Naive thymus-derived CD8-positive, alpha-beta T cell (primary cell): ENCODE measurements at regions of chr5 and their contacts with region 1.

Region 1: GRCh38 chr5:151080623-151081430 is at the start of gene TNIP1:
- DNase-seq: peak; percentile 85 to 95 (median 92)
- ATAC-seq: peak; percentile 91 to 92
- H3K4me3 Mint-ChIP-seq: peak within 1 kb of the TSS; percentile 83 to 96 (median 92)
- H3K27ac Mint-ChIP-seq: peak within 1 kb of the TSS; percentile 75 to 97 (median 94)
- H3K4me1 Mint-ChIP-seq: peaks cover 37 to 90% (median 62%) of the 10 kb centered on the region in 4 donors
- H3K27me3 Mint-ChIP-seq: no peaks in the 10 kb centered on the region
- polyA plus RNA-seq, gene TNIP1: 25.6 to 37.5 (median 29.8) TPM

Region 2: GRCh38 chr5:151097786-151098498 is 17.1 kb after region 1 on chr5:
- POLR2A ChIA-PET with region 1: interaction called, 16 read pairs
- DNase-seq: peak in 1 of 10 donors; percentile 43
- ATAC-seq: peak; percentile 32 to 62
- H3K4me3 Mint-ChIP-seq: peak overlapping the region in 9 of 10 donors; percentile 20 to 71 (median 40)
- H3K27ac Mint-ChIP-seq: peak overlapping the region; percentile 64 to 93 (median 90)
- H3K4me1 Mint-ChIP-seq: peaks cover 33 to 76% (median 75%) of the 10 kb centered on the region in 4 donors
- H3K27me3 Mint-ChIP-seq: no peaks in the 10 kb centered on the region

Region 3: GRCh38 chr5:151107738-151108508 is 27.1 kb after region 1 on chr5:
- POLR2A ChIA-PET with region 1: interaction called, 12 read pairs
- DNase-seq: no peak
- ATAC-seq: no peak
- H3K4me3 Mint-ChIP-seq: no peak overlapping the region
- H3K27ac Mint-ChIP-seq: peak overlapping the region in 6 of 10 donors; percentile 1 to 78 (median 51)
- H3K4me1 Mint-ChIP-seq: peaks cover 0 to 6% (median 3%) of the 10 kb centered on the region in 4 donors
- H3K27me3 Mint-ChIP-seq: no peaks in the 10 kb centered on the region